Activated T-helper 2 cell treated with anti-CD3 and anti-CD28 coated beads, Interferon-gamma antibody, Interleukin-2, Interleukin-4, amounts not matched to agents 10 μg/mL and 5 μg/mL and 100 μg/mL, durations not matched to agents 14 hours and 24 hours and 36 hours (primary cell): ENCODE measurements at regions of chrX and their contacts with region 1.

Region 1: GRCh38 chrX:22135994-22136684 is 104.0 kb downstream of the PHEX start:
- DNase-seq: no peak
- H3K4me3 Mint-ChIP-seq: no peak overlapping the region
- H3K27ac Mint-ChIP-seq: no peak overlapping the region
- H3K4me1 Mint-ChIP-seq: peaks cover 4% of the 10 kb centered on the region
- H3K27me3 Mint-ChIP-seq: no peaks in the 10 kb centered on the region

Region 2: DNA sequence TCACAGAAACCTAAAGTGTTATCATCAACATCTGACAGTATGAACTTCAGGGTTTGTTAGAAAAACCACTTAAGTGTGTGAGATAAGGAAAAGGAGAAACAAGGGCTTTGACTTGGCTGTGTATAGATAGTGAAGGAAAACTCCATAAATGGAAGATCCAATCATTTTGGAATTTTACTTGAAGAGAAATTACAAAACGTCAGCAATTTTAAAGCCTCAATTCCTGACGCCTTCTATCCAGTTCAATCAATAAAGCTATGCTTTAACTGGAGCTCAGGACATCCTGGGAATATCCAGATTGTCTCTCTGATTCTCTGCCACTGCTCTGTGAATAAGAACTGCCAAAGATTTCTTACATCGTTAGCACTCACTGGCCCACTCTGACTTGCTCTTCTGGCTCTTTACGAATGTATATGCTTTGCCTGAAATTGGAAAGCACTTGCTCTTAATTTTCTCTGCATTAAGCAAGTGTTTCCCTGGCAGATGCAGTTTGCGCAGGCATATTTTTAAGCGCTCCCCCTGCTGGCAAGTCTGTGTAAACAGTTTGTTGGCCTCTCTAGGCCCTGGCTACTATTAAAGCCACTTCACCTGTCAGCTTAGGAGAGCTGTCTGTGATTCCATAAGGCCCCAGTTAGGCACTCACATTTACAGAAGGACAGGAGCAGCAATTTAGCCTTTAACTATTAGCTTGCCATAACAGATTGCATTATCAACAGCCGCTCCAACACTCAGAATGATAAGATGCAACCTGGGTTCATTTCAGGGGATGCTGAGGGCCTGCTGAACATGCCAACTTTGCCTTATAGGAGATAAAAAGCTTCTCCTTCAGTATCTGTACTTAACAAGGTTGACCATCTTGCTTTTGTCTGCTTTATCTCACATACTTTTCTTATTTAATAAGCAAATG is 612.2 kb after region 1 on chrX:
- intact Hi-C with region 1: loop called (anchors 5 kb)
- DNase-seq: no peak
- H3K4me3 Mint-ChIP-seq: no peak overlapping the region
- H3K27ac Mint-ChIP-seq: no peak overlapping the region
- H3K4me1 Mint-ChIP-seq: no peaks in the 10 kb centered on the region
- H3K27me3 Mint-ChIP-seq: peaks cover 2% of the 10 kb centered on the region

Region 3: DNA sequence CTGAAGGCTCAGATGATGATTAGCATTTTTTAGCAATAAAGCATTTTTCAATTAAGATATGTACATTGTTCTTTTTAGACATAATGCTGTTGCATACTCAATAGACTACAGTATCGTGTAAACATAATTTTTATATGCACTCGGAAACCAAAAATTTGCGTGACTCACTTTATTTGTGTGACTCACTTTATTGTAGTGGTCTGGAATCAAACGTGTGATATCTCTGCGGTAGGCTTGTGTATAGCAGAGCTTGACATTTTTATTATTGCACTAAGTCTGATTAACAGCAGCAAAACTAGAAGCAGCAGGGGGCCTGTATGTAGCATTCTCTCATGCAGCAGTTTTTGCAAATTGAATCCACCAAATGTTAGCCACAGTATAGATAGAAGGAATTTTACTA is 1412.0 kb after region 1 on chrX:
- intact Hi-C with region 1: no loop called
- DNase-seq: no peak
- H3K4me3 Mint-ChIP-seq: no peak overlapping the region
- H3K27ac Mint-ChIP-seq: no peak overlapping the region
- H3K4me1 Mint-ChIP-seq: no peaks in the 10 kb centered on the region
- H3K27me3 Mint-ChIP-seq: no peaks in the 10 kb centered on the region